ENCODE measurements at regions of chr16 and their contacts with region 1.

Region 1: DNA sequence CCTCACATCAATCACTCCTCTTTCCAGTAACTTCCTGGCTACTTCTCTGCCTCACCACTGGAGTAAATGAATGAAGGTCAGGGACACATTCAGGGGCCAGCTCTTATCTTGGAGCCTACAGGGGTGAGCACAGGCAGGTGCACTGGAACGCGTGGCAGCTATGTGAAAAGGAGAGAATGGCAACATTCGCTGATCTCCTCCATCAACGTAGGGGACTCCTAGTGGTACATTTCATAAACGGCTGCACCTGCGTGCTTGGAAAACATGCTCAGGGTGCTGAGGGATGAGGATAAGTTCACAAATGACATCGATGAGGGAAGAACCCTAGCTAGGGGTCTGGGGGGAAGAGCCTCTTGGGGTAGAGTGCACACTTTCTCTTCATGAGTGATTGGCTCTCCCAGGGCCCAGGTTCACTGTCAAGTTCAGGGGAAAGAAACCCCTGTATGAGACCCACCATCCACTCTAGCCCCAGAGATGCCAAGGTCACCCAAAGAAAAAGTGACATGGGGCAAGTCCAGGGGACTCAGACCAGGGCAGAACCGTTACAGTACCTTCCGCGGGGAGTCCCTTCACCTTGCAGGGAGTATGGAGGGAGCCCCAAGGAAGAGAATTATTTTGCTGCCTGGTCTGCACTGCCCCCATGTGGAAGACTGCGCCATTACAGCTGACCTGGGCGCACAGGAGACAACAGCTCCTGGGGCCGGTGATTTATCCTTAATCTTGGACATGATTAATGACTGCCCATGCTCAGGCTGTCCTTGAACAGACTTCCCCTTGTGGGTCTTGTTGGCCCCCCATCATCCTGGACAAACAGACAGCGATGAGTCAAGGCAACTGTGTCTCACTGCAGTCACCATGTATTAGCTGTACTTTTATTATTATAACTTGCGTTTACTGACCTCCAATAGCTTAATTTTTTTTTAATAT is 30.1 kb downstream of the VAC14 start:
- DNase-seq: no peak
- H3K4me3 ChIP-seq: no peak overlapping the region
- H3K27me3 ChIP-seq: no peaks in the 10 kb centered on the region
- CTCF ChIP-seq: peak; percentile 96

Region 2: DNA sequence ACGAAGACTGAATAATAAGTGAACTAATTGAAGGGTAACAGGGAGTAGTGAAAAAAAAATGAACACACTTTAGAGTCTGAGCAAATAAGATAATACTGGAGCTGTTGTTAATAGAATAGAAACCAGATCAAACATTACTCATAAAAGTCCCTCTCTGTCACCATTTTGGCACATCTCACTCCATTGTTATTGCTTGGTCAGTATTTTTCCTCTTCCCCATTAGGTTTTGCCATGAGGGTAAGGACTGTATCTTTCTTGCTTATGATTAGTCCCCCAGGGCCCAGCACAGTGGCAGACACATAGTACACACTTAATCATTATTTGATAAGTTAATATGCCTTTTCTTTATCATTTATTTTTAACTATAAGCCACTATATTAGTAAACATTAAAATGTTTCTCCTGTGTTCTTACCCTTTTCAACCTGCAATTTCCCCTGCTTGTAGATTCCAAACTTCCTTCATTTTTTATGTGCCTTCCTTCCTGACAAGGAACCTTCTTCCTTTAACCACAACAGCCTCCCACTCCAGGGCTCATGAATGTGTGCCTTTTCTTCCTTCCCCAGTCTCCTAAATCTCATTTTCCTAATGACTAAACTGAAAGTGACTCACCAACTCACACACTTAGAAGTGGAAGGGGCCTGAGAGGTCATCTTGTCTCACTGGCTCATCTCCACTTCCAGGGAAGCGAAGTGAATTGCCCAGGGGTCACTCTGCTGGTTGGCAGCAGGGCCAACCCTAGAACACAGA is 1753.7 kb before region 1 on chr16:
- CTCF ChIA-PET with region 1: no interaction called
- POLR2A ChIA-PET with region 1: no interaction called
- DNase-seq: peak; percentile 26
- H3K4me3 ChIP-seq: no peak overlapping the region
- H3K27me3 ChIP-seq: no peaks in the 10 kb centered on the region
- CTCF ChIP-seq: no peak

Region 3: DNA sequence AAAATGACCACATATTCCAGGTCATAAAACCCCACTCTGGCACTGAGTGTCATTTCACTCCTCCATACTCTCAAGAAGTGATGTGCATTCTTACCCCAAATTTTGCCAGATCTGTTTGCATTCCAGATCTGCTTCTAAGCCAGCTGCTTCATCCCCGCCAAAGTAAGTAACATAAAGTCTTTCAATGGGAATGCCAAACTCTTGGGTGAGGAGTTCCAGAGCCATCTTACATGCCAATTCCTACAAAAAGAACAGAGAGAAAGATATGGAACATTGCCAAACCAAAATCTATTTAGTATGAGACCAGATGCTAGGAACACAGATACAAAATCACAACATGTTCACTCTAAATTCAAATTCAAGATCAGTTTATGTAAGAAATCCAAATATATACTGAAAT is 494.5 kb before region 1 on chr16:
- CTCF ChIA-PET with region 1: no interaction called
- POLR2A ChIA-PET with region 1: no interaction called
- DNase-seq: no peak
- H3K4me3 ChIP-seq: no peak overlapping the region
- H3K27me3 ChIP-seq: no peaks in the 10 kb centered on the region
- CTCF ChIP-seq: no peak

Region 4: GRCh38 chr16:70589998-70590471 is 180.9 kb before region 1 on chr16:
- CTCF ChIA-PET with region 1: no interaction called
- POLR2A ChIA-PET with region 1: no interaction called
- DNase-seq: peak; percentile 31
- H3K4me3 ChIP-seq: no peak overlapping the region
- H3K27me3 ChIP-seq: no peaks in the 10 kb centered on the region; the same call in 1 of the 2 replicates
- CTCF ChIP-seq: no peak

Region 5: DNA sequence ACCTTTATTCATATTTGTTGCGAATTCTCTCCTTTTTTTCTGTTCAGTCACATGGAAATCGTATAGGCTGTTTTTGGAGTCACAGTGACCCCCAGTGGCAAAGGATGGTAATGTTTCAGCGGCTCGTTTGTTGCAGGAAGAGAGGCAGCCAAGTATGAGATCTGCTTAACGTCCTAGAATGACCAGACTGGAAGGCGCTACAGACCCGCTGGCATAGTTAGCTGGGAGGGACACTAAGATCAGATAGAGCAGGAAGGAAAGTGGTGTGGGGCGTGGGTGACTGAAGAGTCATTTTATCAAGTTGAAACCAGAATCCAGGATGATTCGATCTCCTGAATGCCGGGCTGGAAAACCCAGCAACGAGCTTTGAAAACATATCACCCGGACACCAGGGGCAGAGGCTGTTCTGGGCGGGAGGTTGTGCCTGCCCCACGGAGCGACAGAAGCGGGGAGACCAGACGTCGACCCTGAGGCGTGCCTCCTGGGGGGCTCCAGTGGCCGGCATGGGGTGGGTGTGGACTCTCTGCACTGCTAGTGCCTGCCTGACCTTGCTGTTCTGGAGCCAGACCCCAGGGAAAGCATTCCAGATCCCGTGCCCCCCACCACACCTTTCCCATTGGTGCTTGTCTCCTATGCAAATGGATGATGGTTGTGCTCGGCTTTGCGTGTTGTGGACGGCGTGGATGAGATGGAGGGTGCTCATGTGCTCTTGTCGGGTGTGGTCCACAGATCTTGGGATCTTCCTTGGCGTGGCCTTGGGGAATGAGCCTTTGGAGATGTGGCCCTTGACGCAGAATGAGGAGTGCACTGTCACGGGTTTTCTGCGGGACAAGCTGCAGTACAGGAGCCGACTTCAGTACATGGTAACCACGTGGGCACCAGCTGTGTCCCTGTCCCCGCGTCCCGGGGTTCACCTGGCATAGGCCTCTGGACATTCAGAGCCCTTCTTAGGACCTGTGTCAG is 116.8 kb before region 1 on chr16:
- CTCF ChIA-PET with region 1: interaction called, 63 read pairs
- POLR2A ChIA-PET with region 1: no interaction called
- DNase-seq: peak; percentile 48
- H3K4me3 ChIP-seq: peak overlapping the region; percentile 17; the same call in 1 of the 2 replicates
- H3K27me3 ChIP-seq: no peaks in the 10 kb centered on the region
- CTCF ChIP-seq: peak; percentile 75

Region 6: GRCh38 chr16:70665966-70666315 is 104.9 kb before region 1 on chr16:
- CTCF ChIA-PET with region 1: interaction called, 21 read pairs
- POLR2A ChIA-PET with region 1: interaction called, 3 read pairs
- DNase-seq: no peak
- H3K4me3 ChIP-seq: no peak overlapping the region
- H3K27me3 ChIP-seq: no peaks in the 10 kb centered on the region
- CTCF ChIP-seq: no peak

Region 7: GRCh38 chr16:70685938-70686375 is 84.9 kb before region 1 on chr16 and contains the start of gene MTSS2:
- CTCF ChIA-PET with region 1: interaction called, 117 read pairs
- POLR2A ChIA-PET with region 1: interaction called, 11 read pairs
- DNase-seq: no peak
- H3K4me3 ChIP-seq: peak within 1 kb of the TSS; percentile 92
- H3K27me3 ChIP-seq: no peaks in the 10 kb centered on the region
- CTCF ChIP-seq: no peak
- polyA plus RNA-seq, gene MTSS2: 86.4 and 170 TPM in 2 replicates

Region 8: DNA sequence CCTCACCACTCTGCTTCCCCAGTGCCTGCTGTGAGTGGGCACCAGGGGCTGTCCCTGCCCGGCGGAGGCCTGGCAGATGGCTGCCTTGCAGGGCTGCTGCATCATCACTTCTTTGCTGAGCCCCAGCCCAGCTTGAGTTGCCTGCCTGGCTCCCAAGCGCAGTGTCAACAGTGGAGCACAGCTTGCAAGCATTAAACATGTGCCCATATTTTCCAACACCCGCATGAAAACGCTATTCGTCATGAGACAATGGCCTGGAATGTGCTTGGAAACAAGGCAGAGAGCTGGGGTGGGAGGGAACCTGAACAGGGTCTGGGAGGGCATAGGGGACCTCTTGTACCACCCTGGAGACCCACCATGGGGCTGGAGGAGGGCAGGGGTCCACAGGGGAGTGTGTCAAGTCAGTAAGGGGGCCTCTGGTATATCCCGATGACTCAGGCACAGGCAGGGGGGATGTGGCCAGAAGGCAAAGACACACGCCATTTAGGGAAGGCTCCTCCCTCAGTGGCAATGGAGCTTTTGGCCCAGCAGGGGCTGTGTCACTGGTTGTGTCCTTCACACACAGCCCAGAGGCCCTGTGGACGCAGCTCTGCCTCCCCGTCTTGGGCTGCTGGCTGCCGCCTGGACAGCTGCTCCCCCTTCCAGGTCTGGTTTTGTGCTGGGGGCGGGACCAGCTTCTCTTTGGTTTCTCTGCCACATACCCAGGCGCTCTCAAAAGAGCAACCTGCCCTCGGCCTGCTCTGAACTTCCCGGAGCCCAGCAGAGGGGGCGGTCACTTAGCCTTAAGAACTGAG is 67.7 kb before region 1 on chr16:
- CTCF ChIA-PET with region 1: interaction called, 17 read pairs
- POLR2A ChIA-PET with region 1: interaction called, 3 read pairs
- DNase-seq: peak; percentile 90
- H3K4me3 ChIP-seq: no peak overlapping the region
- H3K27me3 ChIP-seq: no peaks in the 10 kb centered on the region
- CTCF ChIP-seq: peak; percentile 71

Region 9: DNA sequence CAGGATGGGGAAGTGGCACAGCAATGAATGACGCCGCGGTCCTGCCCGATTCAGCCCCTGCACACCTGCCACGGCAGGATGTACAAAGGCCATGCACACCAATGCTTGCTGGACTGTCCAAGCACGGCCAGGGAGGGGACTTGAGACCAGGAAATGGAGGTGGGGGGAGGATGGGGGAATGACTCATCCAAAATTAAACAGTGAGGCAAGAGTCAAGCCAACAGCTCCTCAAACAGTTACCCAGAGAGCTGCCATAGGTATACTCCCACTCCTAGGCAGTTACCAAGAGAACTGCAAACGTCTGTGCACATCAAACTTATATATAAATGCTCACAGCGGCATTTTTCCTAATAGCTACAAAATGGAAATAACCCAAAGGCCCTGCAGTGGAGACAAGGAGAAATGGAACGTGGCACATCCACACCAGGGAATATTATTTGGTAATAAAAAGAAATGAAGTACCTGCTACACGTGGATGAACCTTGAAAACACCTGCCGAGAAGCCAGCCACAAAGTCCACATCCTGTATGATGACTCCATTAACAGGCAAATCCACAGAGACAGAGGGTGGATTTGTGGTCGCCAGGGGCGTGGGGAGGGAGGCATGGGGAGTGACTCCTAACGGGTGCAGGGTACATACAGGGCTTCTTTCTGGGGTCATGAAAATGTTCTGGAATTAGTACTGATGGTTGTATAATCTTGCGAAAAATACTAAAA is 24.0 kb before region 1 on chr16:
- CTCF ChIA-PET with region 1: interaction called, 35 read pairs
- POLR2A ChIA-PET with region 1: no interaction called
- DNase-seq: peak; percentile 75
- H3K4me3 ChIP-seq: no peak overlapping the region
- H3K27me3 ChIP-seq: no peaks in the 10 kb centered on the region
- CTCF ChIP-seq: no peak